GM12878 (cell line): ENCODE measurements at regions of chr12 and their contacts with region 1.

Region 1: GRCh38 chr12:42372154-42372791 is 46.3 kb downstream of the PPHLN1 start:
- DNase-seq: peak; percentile 49
- ATAC-seq: peak; percentile 99
- H3K4me3 ChIP-seq: no peak overlapping the region
- H3K27ac ChIP-seq: no peak overlapping the region
- H3K4me1 ChIP-seq: peaks cover 4% of the 10 kb centered on the region
- H3K27me3 ChIP-seq: no peaks in the 10 kb centered on the region
- CTCF ChIP-seq: peak; percentile 71 to 86 (median 83)
- EP300 ChIP-seq: no peak
- POLR2A ChIP-seq: no peak
- RAD21 ChIP-seq: peak; percentile 96

Region 2: GRCh38 chr12:40946612-40947194 is 1425.6 kb before region 1 on chr12:
- CTCF ChIA-PET with region 1: interaction called, 7 read pairs
- POLR2A ChIA-PET with region 1: no interaction called
- RAD21 ChIA-PET with region 1: interaction called, 3 read pairs
- SMC1A ChIA-PET with region 1: no interaction called
- in situ Hi-C with region 1: no loop called
- intact Hi-C with region 1: loop called (anchors 5 kb)
- DNase-seq: no peak
- ATAC-seq: no peak
- H3K4me3 ChIP-seq: no peak overlapping the region
- H3K27ac ChIP-seq: no peak overlapping the region
- H3K4me1 ChIP-seq: no peaks in the 10 kb centered on the region
- H3K27me3 ChIP-seq: no peaks in the 10 kb centered on the region
- CTCF ChIP-seq: peak; percentile 28 to 56 (median 53); a peak in 5 of 6 replicates
- EP300 ChIP-seq: no peak
- POLR2A ChIP-seq: no peak
- RAD21 ChIP-seq: peak; percentile 76

Region 3: GRCh38 chr12:42023733-42024494 is 348.4 kb before region 1 on chr12:
- CTCF ChIA-PET with region 1: interaction called, 14 read pairs
- POLR2A ChIA-PET with region 1: no interaction called
- RAD21 ChIA-PET with region 1: interaction called, 8 read pairs
- SMC1A ChIA-PET with region 1: interaction called, 16 read pairs
- in situ Hi-C with region 1: no loop called
- intact Hi-C with region 1: loop called (anchors 10 kb)
- DNase-seq: peak; percentile 21
- ATAC-seq: peak; percentile 95
- H3K4me3 ChIP-seq: no peak overlapping the region
- H3K27ac ChIP-seq: no peak overlapping the region
- H3K4me1 ChIP-seq: peaks cover 4% of the 10 kb centered on the region; the same call in 1 of the 2 replicates
- H3K27me3 ChIP-seq: no peaks in the 10 kb centered on the region
- CTCF ChIP-seq: peak; percentile 90 to 92 (median 91)
- EP300 ChIP-seq: no peak
- POLR2A ChIP-seq: no peak
- RAD21 ChIP-seq: peak; percentile 88

Region 4: GRCh38 chr12:42237052-42237852 is 135.0 kb before region 1 on chr12:
- CTCF ChIA-PET with region 1: interaction called, 6 read pairs
- POLR2A ChIA-PET with region 1: interaction called, 4 read pairs
- RAD21 ChIA-PET with region 1: interaction called, 5 read pairs
- SMC1A ChIA-PET with region 1: interaction called, 4 read pairs
- in situ Hi-C with region 1: no loop called
- intact Hi-C with region 1: loop called (anchors 2 kb)
- DNase-seq: peak; percentile 41
- ATAC-seq: peak; percentile 83
- H3K4me3 ChIP-seq: peak overlapping the region; percentile 73
- H3K27ac ChIP-seq: peak overlapping the region; percentile 87
- H3K4me1 ChIP-seq: peaks cover 3% of the 10 kb centered on the region; the same call in 1 of the 2 replicates
- H3K27me3 ChIP-seq: no peaks in the 10 kb centered on the region
- CTCF ChIP-seq: peak; percentile 48 to 63 (median 53)
- EP300 ChIP-seq: no peak
- POLR2A ChIP-seq: peak; percentile 91
- RAD21 ChIP-seq: peak; percentile 30

Region 5: GRCh38 chr12:42338280-42338679 is 34.0 kb before region 1 on chr12:
- CTCF ChIA-PET with region 1: interaction called, 20 read pairs
- POLR2A ChIA-PET with region 1: interaction called, 5 read pairs
- RAD21 ChIA-PET with region 1: interaction called, 7 read pairs
- SMC1A ChIA-PET with region 1: interaction called, 6 read pairs
- in situ Hi-C with region 1: no loop called
- intact Hi-C with region 1: loop called (anchors 5 kb)
- DNase-seq: no peak
- ATAC-seq: no peak
- H3K4me3 ChIP-seq: no peak overlapping the region
- H3K27ac ChIP-seq: no peak overlapping the region
- H3K4me1 ChIP-seq: no peaks in the 10 kb centered on the region; the same call in 1 of the 2 replicates
- H3K27me3 ChIP-seq: no peaks in the 10 kb centered on the region
- CTCF ChIP-seq: no peak
- EP300 ChIP-seq: no peak
- POLR2A ChIP-seq: no peak
- RAD21 ChIP-seq: no peak

Region 6: DNA sequence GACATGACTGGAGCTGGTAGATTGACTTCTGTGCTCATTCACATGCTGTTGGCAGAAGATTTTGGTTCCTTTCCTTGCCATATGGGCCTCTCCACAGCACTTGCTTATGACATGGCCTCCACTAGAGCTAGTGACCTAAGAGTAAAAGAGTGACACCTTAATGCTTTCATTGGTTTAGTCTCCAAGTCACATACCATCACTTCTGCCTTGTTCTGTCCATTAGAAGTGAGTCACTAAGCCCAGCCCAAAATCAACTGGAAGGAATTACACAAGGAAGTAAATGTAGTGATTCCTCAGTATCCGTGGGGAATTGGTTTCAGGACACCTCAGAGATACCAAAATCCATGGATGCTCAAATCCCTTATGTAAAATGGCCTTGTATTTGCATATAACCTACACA is 35.0 kb after region 1 on chr12:
- CTCF ChIA-PET with region 1: interaction called, 13 read pairs
- POLR2A ChIA-PET with region 1: no interaction called
- RAD21 ChIA-PET with region 1: interaction called, 3 read pairs
- SMC1A ChIA-PET with region 1: no interaction called
- in situ Hi-C with region 1: no loop called
- intact Hi-C with region 1: no loop called
- DNase-seq: no peak
- ATAC-seq: no peak
- H3K4me3 ChIP-seq: no peak overlapping the region
- H3K27ac ChIP-seq: no peak overlapping the region
- H3K4me1 ChIP-seq: no peaks in the 10 kb centered on the region
- H3K27me3 ChIP-seq: no peaks in the 10 kb centered on the region
- CTCF ChIP-seq: no peak
- EP300 ChIP-seq: no peak
- POLR2A ChIP-seq: no peak
- RAD21 ChIP-seq: no peak